Activated CD4-positive, alpha-beta memory T cell treated with anti-CD3 and anti-CD28 coated beads for 36 hours (primary cell): ENCODE measurements at regions of chr9 and their contacts with region 1.

Region 1: DNA sequence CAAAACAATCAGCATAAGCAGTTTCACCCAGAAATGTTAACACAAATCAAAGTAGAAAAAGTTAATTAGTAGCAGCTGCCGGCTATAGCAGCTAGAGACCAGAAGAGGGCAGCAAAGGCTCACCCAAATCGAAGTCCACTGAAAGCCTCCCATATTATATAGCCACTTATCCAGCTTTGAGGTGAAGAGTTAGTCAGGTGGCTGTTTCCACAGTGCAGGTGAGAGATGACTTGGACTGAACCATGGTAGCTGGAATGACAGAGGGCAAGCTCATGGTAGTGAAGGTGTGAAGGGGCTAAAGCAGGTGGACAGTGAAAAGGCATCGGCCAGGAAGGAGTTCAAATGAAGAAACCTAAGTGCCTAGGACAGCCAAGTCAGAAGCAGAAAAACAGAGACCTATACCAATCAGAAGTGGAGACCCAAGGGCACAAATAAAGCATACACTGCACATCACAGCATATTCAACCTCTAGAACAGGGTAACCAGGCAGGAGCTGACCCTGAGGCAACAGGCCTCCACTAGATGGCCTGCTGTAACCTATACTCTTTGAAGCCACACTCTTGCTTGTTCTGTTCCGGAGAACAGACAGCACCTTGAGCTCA is 7.2 kb upstream of the RNF38 start:
- DNase-seq: peak; percentile 77
- H3K4me3 Mint-ChIP-seq: no peak overlapping the region
- H3K27ac Mint-ChIP-seq: peak overlapping the region; percentile 67
- H3K4me1 Mint-ChIP-seq: peaks cover 10% of the 10 kb centered on the region
- H3K27me3 Mint-ChIP-seq: no peaks in the 10 kb centered on the region

Region 2: GRCh38 chr9:36258208-36258988 is 148.8 kb before region 1 on chr9 and contains the start of gene GNE:
- CTCF ChIA-PET with region 1: no interaction called
- POLR2A ChIA-PET with region 1: no interaction called
- intact Hi-C with region 1: no loop called
- DNase-seq: peak; percentile 98
- H3K4me3 Mint-ChIP-seq: peak within 1 kb of the TSS; percentile 96
- H3K27ac Mint-ChIP-seq: peak within 1 kb of the TSS; percentile 80
- H3K4me1 Mint-ChIP-seq: peaks cover 14% of the 10 kb centered on the region
- H3K27me3 Mint-ChIP-seq: no peaks in the 10 kb centered on the region
- total RNA-seq, gene GNE: 19.2 to 20.5 TPM

Region 3: DNA sequence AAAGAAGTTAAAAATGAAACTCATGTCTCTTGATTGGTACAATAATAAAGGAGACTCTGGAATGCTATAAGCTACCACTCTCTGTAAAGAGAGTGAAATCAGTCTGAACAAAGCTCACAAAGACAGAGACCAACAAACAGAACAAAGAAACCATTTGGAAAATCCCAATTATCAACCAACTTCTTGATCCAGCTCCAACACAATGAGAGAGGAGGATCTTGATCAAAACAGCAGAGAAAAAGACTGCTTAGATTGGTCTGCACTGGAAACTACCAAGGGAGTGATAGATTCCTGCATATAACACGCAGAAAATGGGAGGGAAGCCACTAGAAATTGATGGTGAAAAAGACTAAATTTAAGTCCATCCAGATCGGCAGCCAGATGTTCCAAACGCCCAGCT is 16.0 kb after region 1 on chr9:
- CTCF ChIA-PET with region 1: interaction called, 24 read pairs
- POLR2A ChIA-PET with region 1: no interaction called
- intact Hi-C with region 1: no loop called
- DNase-seq: no peak
- H3K4me3 Mint-ChIP-seq: no peak overlapping the region
- H3K27ac Mint-ChIP-seq: no peak overlapping the region
- H3K4me1 Mint-ChIP-seq: peaks cover 27% of the 10 kb centered on the region
- H3K27me3 Mint-ChIP-seq: no peaks in the 10 kb centered on the region

Region 4: GRCh38 chr9:36441966-36442365 is 34.7 kb after region 1 on chr9:
- CTCF ChIA-PET with region 1: interaction called, 27 read pairs
- POLR2A ChIA-PET with region 1: no interaction called
- intact Hi-C with region 1: no loop called
- DNase-seq: no peak
- H3K4me3 Mint-ChIP-seq: no peak overlapping the region
- H3K27ac Mint-ChIP-seq: no peak overlapping the region
- H3K4me1 Mint-ChIP-seq: peaks cover 43% of the 10 kb centered on the region
- H3K27me3 Mint-ChIP-seq: no peaks in the 10 kb centered on the region

Region 5: GRCh38 chr9:36461323-36461722 is 54.1 kb after region 1 on chr9:
- CTCF ChIA-PET with region 1: interaction called, 22 read pairs
- POLR2A ChIA-PET with region 1: no interaction called
- intact Hi-C with region 1: no loop called
- DNase-seq: no peak
- H3K4me3 Mint-ChIP-seq: no peak overlapping the region
- H3K27ac Mint-ChIP-seq: no peak overlapping the region
- H3K4me1 Mint-ChIP-seq: peaks cover 48% of the 10 kb centered on the region
- H3K27me3 Mint-ChIP-seq: no peaks in the 10 kb centered on the region

Region 6: DNA sequence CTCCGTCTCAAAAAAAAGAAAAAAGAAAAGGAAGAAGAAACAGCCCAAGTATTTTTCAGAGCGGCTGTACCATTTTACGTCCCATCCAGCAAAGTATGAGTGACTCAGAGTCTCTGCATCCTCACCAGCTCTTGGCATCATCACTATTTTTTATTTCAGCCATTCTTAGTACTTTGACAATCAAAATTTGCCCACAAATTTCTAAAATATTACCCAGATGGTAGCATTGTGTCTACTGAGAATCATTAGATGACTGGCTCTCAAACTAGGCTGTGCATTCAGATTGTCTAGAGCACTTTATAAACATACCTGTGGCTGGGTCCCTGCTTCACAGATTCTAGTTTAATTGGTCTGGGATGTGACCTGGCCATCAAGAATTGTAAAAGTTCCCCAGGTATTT is 143.9 kb after region 1 on chr9:
- CTCF ChIA-PET with region 1: interaction called, 342 read pairs
- POLR2A ChIA-PET with region 1: interaction called, 4 read pairs
- intact Hi-C with region 1: loop called (anchors 1 kb)
- DNase-seq: no peak
- H3K4me3 Mint-ChIP-seq: no peak overlapping the region
- H3K27ac Mint-ChIP-seq: no peak overlapping the region
- H3K4me1 Mint-ChIP-seq: no peaks in the 10 kb centered on the region
- H3K27me3 Mint-ChIP-seq: peaks cover 4% of the 10 kb centered on the region

Region 7: GRCh38 chr9:36572515-36573418 is 165.5 kb after region 1 on chr9 and contains the start of gene MELK:
- CTCF ChIA-PET with region 1: interaction called, 12 read pairs
- POLR2A ChIA-PET with region 1: no interaction called
- intact Hi-C with region 1: no loop called
- DNase-seq: peak; percentile 90
- H3K4me3 Mint-ChIP-seq: peak within 1 kb of the TSS; percentile 92
- H3K27ac Mint-ChIP-seq: peak within 1 kb of the TSS; percentile 80
- H3K4me1 Mint-ChIP-seq: peaks cover 30% of the 10 kb centered on the region
- H3K27me3 Mint-ChIP-seq: no peaks in the 10 kb centered on the region
- total RNA-seq, gene MELK: 68.4 to 69.6 TPM